Mammary epithelial cell (primary cell): ENCODE measurements at regions of chr4 and their contacts with region 1.

Region 1: GRCh38 chr4:184329659-184330400 is 112.2 kb upstream of the ENPP6 start:
- DNase-seq: peak; percentile 85
- H3K4me3 ChIP-seq: no peak overlapping the region
- H3K27ac ChIP-seq: peak overlapping the region; percentile 83
- H3K4me1 ChIP-seq: peaks cover 37% of the 10 kb centered on the region
- H3K27me3 ChIP-seq: no peaks in the 10 kb centered on the region
- CTCF ChIP-seq: no peak

Region 2: GRCh38 chr4:184355111-184355604 is 25.3 kb after region 1 on chr4:
- CTCF ChIA-PET with region 1: no interaction called
- dilution Hi-C with region 1: no loop called
- in situ Hi-C with region 1: no loop called
- intact Hi-C with region 1: loop called (anchors 1 kb)
- DNase-seq: peak; percentile 75
- H3K4me3 ChIP-seq: no peak overlapping the region
- H3K27ac ChIP-seq: no peak overlapping the region
- H3K4me1 ChIP-seq: peaks cover 21% of the 10 kb centered on the region
- H3K27me3 ChIP-seq: no peaks in the 10 kb centered on the region
- CTCF ChIP-seq: no peak